ENCODE measurements at regions of chr19 and their contacts with region 1.

Region 1: DNA sequence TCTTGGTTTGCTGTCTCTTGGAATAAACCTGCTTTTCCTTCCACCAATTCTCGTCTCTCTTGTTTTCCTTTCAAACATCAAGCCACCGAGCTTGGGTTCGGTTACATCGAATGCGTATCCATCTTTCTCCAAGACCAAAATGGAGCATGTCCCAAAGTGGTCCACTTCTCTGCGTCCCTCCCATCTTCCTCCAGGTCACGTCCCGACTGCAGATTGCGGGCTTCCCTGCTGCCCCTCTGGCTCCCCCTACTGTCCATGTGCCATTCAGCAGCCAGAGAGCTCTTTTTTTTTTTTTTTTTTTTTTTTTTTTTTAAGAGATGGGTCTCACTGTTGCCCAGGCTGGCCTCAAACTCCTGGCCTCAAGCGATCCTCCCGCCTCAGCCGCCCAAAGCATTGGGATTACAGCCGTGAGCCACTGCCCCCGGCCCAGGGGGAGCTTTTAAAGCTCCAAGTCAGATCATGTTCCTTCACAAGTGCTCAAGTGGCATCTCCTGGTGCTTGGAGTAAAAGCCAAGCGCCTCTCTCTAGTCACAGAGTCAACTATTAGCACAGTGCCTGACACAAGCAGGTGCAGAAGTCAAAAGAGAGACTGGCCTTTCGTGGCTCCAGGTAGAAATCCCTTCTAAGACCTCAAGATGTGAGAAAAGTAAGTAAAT is 10.0 kb downstream of the COL5A3 start:
- DNase-seq: no peak
- H3K4me3 ChIP-seq: no peak overlapping the region
- CTCF ChIP-seq: peak; percentile 80

Region 2: GRCh38 chr19:9945319-9945966 is 54.9 kb before region 1 on chr19:
- CTCF ChIA-PET with region 1: interaction called, 31 read pairs
- POLR2A ChIA-PET with region 1: no interaction called
- DNase-seq: peak; percentile 98
- H3K4me3 ChIP-seq: peak overlapping the region; percentile 21; the same call in 1 of the 2 replicates
- CTCF ChIP-seq: peak; percentile 25

Region 3: DNA sequence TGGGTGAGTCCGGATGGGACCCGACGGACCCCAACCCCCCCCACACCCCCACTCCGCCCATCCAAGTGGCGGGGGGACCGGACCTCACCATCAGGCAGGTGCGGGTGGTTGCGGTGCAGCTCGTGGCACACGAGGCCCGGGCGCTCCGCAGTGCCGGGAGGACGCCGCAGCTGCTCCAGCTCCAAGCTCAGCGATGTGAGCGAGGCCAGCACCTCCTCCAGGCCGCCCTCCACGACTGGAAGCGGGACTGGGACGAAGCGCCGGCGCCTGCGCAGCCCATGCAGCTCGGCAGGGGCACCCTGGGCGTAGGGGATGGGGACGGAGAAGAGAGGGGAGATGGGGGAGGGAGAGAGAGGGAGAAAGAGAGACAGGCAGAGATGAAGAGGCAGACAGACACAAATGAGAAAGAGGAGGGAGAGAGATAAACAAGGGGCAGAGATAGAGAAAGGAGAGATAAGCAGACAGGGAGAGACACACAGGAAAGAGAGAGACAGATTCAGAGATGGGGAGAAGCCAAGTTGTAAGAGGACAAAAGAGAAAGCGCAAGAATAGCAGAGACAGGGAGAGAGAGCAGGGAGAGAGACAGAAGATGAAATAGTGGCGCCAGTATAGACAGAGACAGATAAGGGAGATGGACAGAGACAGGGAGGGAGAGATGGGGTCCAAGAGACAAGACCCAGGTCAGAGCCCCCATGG is 33.7 kb before region 1 on chr19:
- CTCF ChIA-PET with region 1: interaction called, 49 read pairs
- POLR2A ChIA-PET with region 1: no interaction called
- DNase-seq: no peak
- H3K4me3 ChIP-seq: no peak overlapping the region
- CTCF ChIP-seq: no peak

Region 4: GRCh38 chr19:9986787-9987281 is 13.5 kb before region 1 on chr19:
- CTCF ChIA-PET with region 1: interaction called, 147 read pairs
- POLR2A ChIA-PET with region 1: interaction called, 3 read pairs
- DNase-seq: no peak
- H3K4me3 ChIP-seq: no peak overlapping the region
- CTCF ChIP-seq: no peak

Region 5: GRCh38 chr19:10027158-10027693 is 26.9 kb after region 1 on chr19:
- CTCF ChIA-PET with region 1: interaction called, 63 read pairs
- POLR2A ChIA-PET with region 1: no interaction called
- DNase-seq: no peak
- H3K4me3 ChIP-seq: no peak overlapping the region
- CTCF ChIP-seq: no peak

Region 6: DNA sequence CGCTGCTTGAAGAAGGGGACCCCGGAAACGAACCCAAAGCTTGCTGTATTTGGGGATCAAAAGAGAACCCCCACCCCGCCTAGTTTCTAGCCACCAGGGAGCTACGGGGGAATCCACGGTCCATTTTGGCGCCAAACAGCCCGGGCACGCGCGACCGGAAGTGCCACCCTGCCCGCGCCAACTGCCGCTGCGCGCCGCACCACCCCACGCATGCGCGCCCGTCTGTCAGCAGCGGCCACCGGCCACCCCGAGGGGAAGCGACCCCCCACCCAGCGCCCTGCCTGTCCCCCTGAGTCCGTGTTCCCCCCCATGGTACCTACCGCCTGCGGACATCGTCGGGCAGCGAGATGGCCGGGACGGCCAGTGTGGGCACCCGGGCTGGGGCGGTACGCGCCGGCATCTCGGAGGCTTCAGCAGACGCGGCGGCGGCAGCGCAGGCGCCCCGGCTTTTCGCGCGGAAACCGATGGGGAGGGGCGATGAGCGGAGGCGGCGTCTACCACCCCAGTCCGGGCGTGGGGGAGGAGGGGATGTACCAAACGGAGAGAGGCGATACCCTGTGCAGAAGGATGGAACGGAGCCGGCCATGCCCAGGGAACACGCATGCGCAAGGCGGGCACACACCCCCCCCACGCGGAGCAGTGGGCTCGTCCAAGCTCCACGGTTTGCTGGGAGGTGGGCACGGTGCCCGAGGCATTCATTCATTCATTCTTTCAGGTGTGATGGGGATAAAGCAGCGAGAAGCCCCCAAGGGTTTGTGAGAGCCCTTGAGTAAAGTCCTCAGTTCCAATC is 194.4 kb after region 1 on chr19 and contains the start of gene DNMT1:
- CTCF ChIA-PET with region 1: no interaction called
- POLR2A ChIA-PET with region 1: no interaction called
- DNase-seq: peak; percentile 77
- H3K4me3 ChIP-seq: peak within 1 kb of the TSS; percentile 94
- CTCF ChIP-seq: no peak